ENCODE measurements at regions of chr3 and their contacts with region 1.

Region 1: DNA sequence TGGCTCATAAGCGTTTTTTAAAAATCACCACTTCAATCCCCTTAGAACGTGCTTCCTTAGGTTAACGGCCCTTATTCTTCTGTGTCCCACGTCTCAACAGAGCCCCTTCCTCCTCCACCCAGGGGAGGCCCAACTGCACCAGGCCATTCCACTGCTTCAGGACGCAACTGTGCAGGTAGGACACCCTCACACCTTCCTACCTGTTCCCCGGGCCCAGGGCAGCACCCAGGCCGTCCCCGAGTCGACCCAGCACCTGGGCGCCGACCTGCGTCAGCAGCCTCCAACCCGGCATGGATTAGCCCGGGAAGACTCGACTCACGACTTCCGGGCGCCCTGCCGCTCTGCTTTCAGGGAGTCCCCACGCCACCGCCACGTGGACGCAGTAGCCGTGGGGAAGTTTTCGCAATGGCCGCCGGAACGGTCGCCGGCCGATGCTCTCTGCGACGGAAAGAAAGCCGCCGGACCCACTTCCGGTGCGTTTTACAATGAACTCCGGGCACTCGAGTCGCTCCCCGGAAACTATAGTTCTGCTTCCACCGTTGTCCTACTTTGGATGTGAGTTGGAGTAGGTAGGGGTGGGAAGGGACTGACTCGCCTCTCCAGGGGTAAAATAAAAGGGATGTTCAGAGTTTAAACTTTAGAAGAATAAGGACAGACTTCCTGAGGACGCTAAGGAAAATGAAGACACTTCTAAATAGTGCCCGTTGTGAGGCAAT is at the start of gene MRPL3:
- DNase-seq: peak; percentile 65 to 83
- ATAC-seq: peak; percentile 97 to 99
- H3K4me3 ChIP-seq: peak within 1 kb of the TSS; percentile 78 to 99 (median 84)
- H3K27ac ChIP-seq: peak within 1 kb of the TSS; percentile 79 to 87 (median 82)
- H3K4me1 ChIP-seq: peaks cover 18 to 20% of the 10 kb centered on the region in 2 donors
- H3K27me3 ChIP-seq: no peaks in the 10 kb centered on the region
- CTCF ChIP-seq: no peak
- POLR2A ChIP-seq: peak in 1 of 2 donors; percentile 34
- total RNA-seq, gene MRPL3: 72.3 to 109 (median 97.1) TPM

Region 2: DNA sequence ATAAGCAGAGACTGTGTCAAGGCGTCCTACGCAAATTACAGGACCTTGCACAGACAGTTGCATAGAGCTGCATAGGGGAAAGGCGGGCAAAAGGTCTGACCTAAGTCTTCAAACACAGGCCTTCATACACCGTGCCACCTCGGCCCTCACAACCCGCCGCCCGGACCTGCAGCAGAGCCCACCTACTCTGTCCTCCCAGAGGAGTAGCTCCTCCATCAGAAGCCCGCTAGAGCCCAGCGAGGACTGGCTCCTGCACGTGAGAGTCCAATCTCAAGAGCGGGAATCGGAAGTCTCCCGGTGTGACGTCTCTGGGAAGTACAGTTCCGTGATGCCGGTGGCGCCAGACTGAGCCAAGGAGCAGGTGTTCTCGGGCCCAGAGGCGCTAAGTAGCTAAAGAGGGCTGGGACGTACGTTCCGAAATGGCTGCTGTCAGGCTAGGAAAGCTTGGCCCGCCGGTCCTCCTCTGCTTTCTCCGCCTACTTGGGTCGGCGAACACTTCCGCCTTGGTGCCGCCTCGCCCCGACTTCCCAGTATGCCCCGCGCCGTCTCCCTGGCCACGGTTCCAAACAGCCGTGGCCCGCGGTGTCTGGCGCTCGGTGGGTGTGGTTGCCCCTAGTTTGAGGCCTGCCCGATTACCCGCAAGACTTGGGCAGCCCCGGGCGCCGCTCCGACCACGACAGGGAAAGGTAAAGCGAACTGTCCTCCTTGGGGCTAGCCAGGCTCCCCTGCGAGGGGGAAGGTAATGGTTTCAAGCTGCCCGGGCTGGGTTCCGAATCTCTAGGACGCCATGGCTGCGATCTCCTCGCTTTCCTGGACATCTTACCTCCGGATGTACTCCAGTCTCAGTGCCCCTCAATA is 476.1 kb before region 1 on chr3 and contains the starts of genes ASTE1 and NEK11:
- in situ Hi-C with region 1: loop called in 1 of 4 experiments (anchors 10 kb)
- intact Hi-C with region 1: loop called (anchors 5 kb)
- DNase-seq: peak; percentile 75 to 76
- ATAC-seq: peak; percentile 96 to 97
- H3K4me3 ChIP-seq: peak within 1 kb of the TSS; percentile 68 to 85 (median 78)
- H3K27ac ChIP-seq: peak within 1 kb of the TSS; percentile 83 to 88 (median 84)
- H3K4me1 ChIP-seq: peaks cover 10 to 19% of the 10 kb centered on the region in 2 donors
- H3K27me3 ChIP-seq: no peaks in the 10 kb centered on the region
- CTCF ChIP-seq: no peak
- POLR2A ChIP-seq: peak in 1 of 2 donors; percentile 27
- total RNA-seq, gene ASTE1: 1.2 to 2.0 (median 1.5) TPM
- total RNA-seq, gene NEK11: 2.1 to 5.2 (median 2.5) TPM

Region 3: GRCh38 chr3:131381444-131382291 is 121.0 kb before region 1 on chr3 and contains the start of gene NUDT16:
- in situ Hi-C with region 1: no loop called
- intact Hi-C with region 1: loop called (anchors 2 kb)
- DNase-seq: peak; percentile 100
- ATAC-seq: peak; percentile 93 to 94
- H3K4me3 ChIP-seq: peak within 1 kb of the TSS; percentile 83 to 97 (median 92)
- H3K27ac ChIP-seq: peak within 1 kb of the TSS; percentile 90 to 94 (median 92)
- H3K4me1 ChIP-seq: peaks cover 28 to 43% of the 10 kb centered on the region in 2 donors
- H3K27me3 ChIP-seq: no peaks in the 10 kb centered on the region
- CTCF ChIP-seq: no peak
- POLR2A ChIP-seq: peak; percentile 82 to 87
- total RNA-seq, gene NUDT16: 10.0 to 18.3 (median 14.4) TPM

Region 4: DNA sequence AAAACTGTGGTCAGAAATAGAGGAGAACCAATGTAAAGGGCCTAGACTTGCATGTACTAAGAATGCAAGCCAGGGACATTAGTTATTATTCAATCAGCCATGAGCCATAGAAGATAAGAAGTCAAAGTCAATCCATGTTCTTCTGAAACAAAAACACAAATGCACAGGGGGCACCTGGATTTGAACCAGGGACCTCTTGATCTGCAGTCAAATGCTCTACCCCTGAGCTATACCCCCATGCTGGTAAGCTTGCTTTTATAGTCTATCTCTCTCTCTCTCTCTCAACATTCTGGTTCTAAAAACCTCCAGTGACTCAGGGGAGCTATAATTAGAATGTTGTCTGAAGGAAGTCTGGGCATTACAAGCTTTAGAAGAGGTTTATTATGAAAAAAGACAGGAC is 728.9 kb after region 1 on chr3:
- in situ Hi-C with region 1: no loop called
- intact Hi-C with region 1: no loop called
- DNase-seq: no peak
- ATAC-seq: no peak
- H3K4me3 ChIP-seq: no peak overlapping the region
- H3K27ac ChIP-seq: no peak overlapping the region
- H3K4me1 ChIP-seq: peaks cover 0 to 5% of the 10 kb centered on the region in 2 donors
- H3K27me3 ChIP-seq: no peaks in the 10 kb centered on the region
- CTCF ChIP-seq: no peak
- POLR2A ChIP-seq: no peak

Measured in gastrocnemius medialis (tissue), 4 donors.